ENCODE measurements at regions of chr20 and their contacts with region 1.

Region 1: GRCh38 chr20:561437-562231 is 18.0 kb upstream of the CSNK2A1 start:
- DNase-seq: peak; percentile 52
- ATAC-seq: peak; percentile 92

Region 2: DNA sequence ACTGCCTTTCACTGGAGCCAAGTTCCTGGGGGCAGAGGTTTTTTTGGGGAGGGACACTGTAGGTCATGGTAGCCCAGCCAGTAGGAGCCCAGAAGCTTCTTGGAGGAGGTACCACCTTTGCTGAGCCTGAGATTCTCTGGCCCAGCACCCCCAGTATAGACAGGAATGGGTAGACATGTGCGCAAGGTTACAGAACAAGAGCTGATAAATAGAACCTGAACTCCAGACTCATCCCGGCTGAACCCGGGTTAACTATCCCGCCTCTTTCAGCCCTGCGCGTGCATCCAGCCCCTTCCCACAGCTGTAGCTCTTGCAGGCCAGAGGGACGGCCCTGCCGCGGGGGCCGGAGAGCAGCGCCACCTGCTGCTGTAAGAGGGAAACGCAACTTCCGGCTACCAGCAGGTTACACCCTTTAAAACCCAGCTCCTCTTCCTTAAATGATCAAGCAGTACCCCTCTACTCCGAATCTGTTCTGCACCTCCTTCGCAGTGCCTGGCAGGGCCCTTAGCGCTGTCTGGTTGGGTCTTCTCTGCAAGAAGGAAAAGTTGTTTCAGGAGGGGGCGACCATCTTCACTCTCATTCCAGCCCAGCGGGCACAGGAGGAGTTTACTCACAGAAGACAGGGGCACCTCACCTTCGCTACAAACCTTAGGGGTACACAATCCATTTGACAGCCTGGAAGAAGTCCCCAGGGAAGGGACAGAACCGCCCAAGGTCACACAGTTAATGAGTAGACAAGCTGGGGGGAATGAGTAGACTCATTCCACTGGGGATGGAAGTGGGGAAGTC is 83.9 kb after region 1 on chr20:
- intact Hi-C with region 1: loop called (anchors 2 kb)
- DNase-seq: peak; percentile 83
- ATAC-seq: peak; percentile 88

Region 3: GRCh38 chr20:740141-740540 is 178.5 kb after region 1 on chr20:
- intact Hi-C with region 1: loop called (anchors 5 kb)
- DNase-seq: no peak
- ATAC-seq: no peak